ENCODE measurements at regions of chr17 and their contacts with region 1.

Region 1: GRCh38 chr17:44331249-44331760 is 6.7 kb upstream of the SLC25A39 start:
- DNase-seq: peak; percentile 87
- ATAC-seq: peak; percentile 22
- H3K4me3 ChIP-seq: no peak overlapping the region
- H3K4me3 Mint-ChIP-seq: no peak overlapping the region
- H3K27ac ChIP-seq: no peak overlapping the region
- H3K27ac Mint-ChIP-seq: peak overlapping the region; percentile 38
- H3K4me1 ChIP-seq: peaks cover 8 to 33% of the 10 kb centered on the region in 2 donors
- H3K4me1 Mint-ChIP-seq: peaks cover 30% of the 10 kb centered on the region
- H3K27me3 ChIP-seq: no peaks in the 10 kb centered on the region
- H3K27me3 Mint-ChIP-seq: no peaks in the 10 kb centered on the region
- CTCF ChIP-seq: peak; percentile 93

Region 2: DNA sequence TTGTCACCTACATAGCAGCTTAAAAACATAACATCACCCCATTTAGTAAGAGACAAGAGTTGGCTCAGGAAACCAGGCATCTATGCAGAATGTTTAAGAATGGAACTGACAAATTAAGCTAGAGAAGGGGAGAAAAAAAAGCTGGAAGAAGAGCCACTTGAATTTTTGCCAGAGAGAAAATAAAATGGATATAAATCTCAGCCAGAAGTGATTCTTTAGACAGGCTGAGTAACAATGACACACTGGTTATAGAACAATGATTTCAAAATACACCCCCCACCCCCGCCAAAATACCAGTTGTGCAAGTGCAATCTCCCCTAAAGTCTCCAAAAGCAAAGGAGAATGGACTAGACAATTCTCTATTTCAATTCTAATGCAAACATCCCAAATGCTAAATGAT is 287.2 kb before region 1 on chr17:
- CTCF ChIA-PET with region 1: no interaction called
- POLR2A ChIA-PET with region 1: no interaction called
- intact Hi-C with region 1: no loop called
- DNase-seq: no peak
- ATAC-seq: no peak
- H3K4me3 ChIP-seq: no peak overlapping the region
- H3K4me3 Mint-ChIP-seq: no peak overlapping the region
- H3K27ac ChIP-seq: no peak overlapping the region
- H3K27ac Mint-ChIP-seq: no peak overlapping the region
- H3K4me1 ChIP-seq: no peaks in the 10 kb centered on the region
- H3K4me1 Mint-ChIP-seq: peaks cover 9% of the 10 kb centered on the region
- H3K27me3 ChIP-seq: no peaks in the 10 kb centered on the region
- H3K27me3 Mint-ChIP-seq: no peaks in the 10 kb centered on the region
- CTCF ChIP-seq: no peak

Region 3: DNA sequence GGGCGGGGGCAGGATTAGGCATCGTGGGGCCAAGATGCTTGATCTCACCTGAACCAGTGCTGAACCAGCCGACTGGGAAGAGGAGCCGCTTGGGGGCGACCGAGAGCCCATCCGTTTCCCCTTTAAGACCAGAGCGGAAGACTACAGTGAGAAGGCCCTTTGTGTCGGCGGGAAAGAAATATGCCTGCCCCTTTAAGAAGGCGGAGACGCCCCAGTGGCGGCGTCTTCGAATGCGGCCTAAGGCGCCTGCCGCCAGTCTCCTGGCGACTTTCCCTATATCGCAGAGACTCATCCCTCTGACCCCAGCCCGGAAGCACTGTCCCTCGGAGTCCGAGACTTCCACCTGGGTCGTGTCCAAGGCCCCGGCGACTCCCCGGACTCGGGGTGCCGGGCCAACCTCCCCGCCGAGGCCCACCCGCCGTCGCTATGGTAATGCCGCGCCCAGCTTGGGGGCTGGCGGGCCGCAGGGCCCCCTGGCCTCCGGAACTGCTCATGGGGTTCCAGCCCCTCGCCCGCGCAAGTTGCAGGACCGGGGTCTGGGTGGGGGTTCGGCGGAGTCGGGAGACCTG is 189.5 kb before region 1 on chr17 and contains the start of gene HROB:
- CTCF ChIA-PET with region 1: interaction called, 3 read pairs
- POLR2A ChIA-PET with region 1: interaction called, 4 read pairs
- intact Hi-C with region 1: loop called (anchors 1 kb)
- DNase-seq: peak; percentile 97
- ATAC-seq: peak; percentile 99
- H3K4me3 ChIP-seq: peak within 1 kb of the TSS; percentile 41 to 85 (median 76)
- H3K4me3 Mint-ChIP-seq: peak within 1 kb of the TSS; percentile 87
- H3K27ac ChIP-seq: peak within 1 kb of the TSS; percentile 57 to 84
- H3K27ac Mint-ChIP-seq: peak within 1 kb of the TSS; percentile 61
- H3K4me1 ChIP-seq: peaks cover 9 to 11% of the 10 kb centered on the region in 2 donors
- H3K4me1 Mint-ChIP-seq: peaks cover 8% of the 10 kb centered on the region
- H3K27me3 ChIP-seq: peaks cover 0 to 20% (median 3%) of the 10 kb centered on the region in 4 experiments
- H3K27me3 Mint-ChIP-seq: peaks cover 14% of the 10 kb centered on the region
- CTCF ChIP-seq: peak; percentile 84
- total RNA-seq, gene HROB: 2.7 and 3.2 TPM in 2 replicates

Region 4: DNA sequence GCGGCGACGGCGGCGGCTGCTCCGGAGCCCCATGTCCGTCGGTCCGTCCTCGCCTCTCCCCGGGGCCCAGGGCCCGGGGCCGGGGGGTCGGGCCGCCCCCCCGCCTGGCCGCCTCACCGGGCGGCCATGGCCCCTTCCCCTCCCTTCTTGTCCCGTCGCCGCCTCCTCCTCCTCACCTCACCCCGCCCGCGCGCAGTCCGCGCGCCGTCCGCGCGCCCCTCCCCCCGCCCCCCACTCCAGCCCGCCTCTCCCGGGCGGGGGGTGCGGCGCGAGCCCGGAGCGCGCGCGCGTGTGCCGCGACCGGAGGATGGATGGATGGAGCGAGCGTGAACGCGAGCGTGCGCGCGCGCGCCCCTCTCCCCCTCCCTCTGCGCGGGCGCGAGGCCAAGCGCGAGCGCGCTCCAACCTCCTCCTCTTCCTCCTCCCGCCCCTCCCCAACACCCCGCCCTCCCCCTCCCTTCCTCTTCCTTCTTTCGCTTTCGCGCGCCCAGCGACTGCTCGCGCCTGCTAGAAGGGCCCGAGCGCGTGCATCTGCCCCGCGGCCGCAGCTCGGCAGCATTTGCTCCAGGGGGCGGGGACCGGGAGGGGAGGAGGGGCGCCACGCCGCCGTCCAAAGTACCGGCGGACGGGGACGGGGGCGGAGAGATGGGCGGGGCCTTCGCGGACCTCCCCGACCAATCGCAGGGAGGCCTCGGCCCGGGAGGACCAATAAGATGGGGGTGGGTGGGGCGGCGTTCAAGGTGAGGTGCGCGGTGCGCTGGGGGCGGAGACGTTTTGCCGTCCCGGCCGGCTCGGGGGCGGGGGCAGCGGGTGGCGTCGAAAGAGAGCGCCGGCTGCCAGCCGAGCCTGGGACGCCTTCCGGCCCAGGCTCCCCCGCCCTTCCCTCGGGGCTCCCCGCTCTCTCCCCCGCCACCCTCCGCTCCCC is 131.5 kb before region 1 on chr17 and contains the start of gene ATXN7L3:
- CTCF ChIA-PET with region 1: interaction called, 14 read pairs
- POLR2A ChIA-PET with region 1: interaction called, 6 read pairs
- intact Hi-C with region 1: no loop called
- DNase-seq: peak; percentile 100
- ATAC-seq: peak; percentile 81
- H3K4me3 ChIP-seq: peak within 1 kb of the TSS; percentile 66 to 83 (median 81)
- H3K4me3 Mint-ChIP-seq: peak within 1 kb of the TSS; percentile 88
- H3K27ac ChIP-seq: peak within 1 kb of the TSS; percentile 89 to 90
- H3K27ac Mint-ChIP-seq: peak within 1 kb of the TSS; percentile 95
- H3K4me1 ChIP-seq: peaks cover 30 to 43% of the 10 kb centered on the region in 2 donors
- H3K4me1 Mint-ChIP-seq: peaks cover 46% of the 10 kb centered on the region
- H3K27me3 ChIP-seq: no peaks in the 10 kb centered on the region
- H3K27me3 Mint-ChIP-seq: no peaks in the 10 kb centered on the region
- CTCF ChIP-seq: no peak
- total RNA-seq, gene ATXN7L3: 107 and 119 TPM in 2 replicates

Region 5: DNA sequence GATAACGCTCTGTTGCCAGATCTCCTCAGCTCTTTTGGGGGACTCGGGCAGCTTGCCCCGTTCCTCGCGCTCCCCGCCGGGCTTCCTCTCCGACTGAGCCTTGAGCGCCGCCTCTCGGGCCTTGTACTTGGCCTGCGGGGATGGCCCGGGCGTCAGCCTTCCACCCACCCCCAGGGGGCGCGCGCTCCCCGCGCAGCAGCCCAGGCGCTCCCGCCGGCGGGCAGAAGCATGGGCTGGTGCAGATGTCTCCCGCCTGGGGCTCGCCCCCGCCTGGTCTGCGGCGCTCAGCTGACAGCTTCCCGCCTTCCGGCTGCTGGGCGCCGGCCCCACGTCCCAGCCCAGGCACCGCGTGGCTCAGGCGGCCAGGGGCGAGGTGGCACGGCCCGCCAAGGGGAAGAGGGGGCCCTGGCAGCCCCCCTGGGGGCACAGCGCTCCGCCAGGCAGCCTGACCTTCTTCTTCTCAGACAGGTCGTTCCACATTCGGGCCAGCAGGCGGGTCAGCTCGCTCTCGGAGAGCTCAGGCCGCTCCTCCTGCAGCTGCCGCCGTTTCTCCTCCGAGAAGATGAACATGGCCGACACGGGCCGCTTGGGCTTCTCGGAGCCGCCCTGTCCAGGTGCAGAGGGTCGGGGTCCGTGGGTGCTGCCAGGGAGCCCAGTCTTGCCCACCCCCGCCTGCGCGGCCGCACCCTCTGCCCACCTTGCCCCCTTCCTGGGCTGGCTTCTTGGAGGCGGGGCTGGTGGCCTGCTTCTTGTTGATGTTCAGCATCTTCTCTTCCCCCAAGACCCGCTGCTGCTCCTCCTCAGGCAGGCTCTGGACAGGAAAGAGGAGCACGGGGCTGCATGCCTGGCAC is 120.7 kb before region 1 on chr17:
- CTCF ChIA-PET with region 1: interaction called, 44 read pairs
- POLR2A ChIA-PET with region 1: interaction called, 7 read pairs
- intact Hi-C with region 1: loop called (anchors 1 kb)
- DNase-seq: peak; percentile 93
- ATAC-seq: peak; percentile 98
- H3K4me3 ChIP-seq: no peak overlapping the region
- H3K4me3 Mint-ChIP-seq: peak overlapping the region; percentile 34
- H3K27ac ChIP-seq: peak overlapping the region; percentile 41 to 71
- H3K27ac Mint-ChIP-seq: peak overlapping the region; percentile 74
- H3K4me1 ChIP-seq: peaks cover 29 to 49% of the 10 kb centered on the region in 2 donors
- H3K4me1 Mint-ChIP-seq: peaks cover 46% of the 10 kb centered on the region
- H3K27me3 ChIP-seq: no peaks in the 10 kb centered on the region
- H3K27me3 Mint-ChIP-seq: no peaks in the 10 kb centered on the region
- CTCF ChIP-seq: peak; percentile 99

Region 6: GRCh38 chr17:44223541-44224071 is 107.7 kb before region 1 on chr17:
- CTCF ChIA-PET with region 1: interaction called, 13 read pairs
- POLR2A ChIA-PET with region 1: interaction called, 29 read pairs
- intact Hi-C with region 1: no loop called
- DNase-seq: no peak
- ATAC-seq: no peak
- H3K4me3 ChIP-seq: no peak overlapping the region
- H3K4me3 Mint-ChIP-seq: no peak overlapping the region
- H3K27ac ChIP-seq: no peak overlapping the region
- H3K27ac Mint-ChIP-seq: peak overlapping the region; percentile 41
- H3K4me1 ChIP-seq: peaks cover 6% of the 10 kb centered on the region in 2 donors
- H3K4me1 Mint-ChIP-seq: peaks cover 11% of the 10 kb centered on the region
- H3K27me3 ChIP-seq: no peaks in the 10 kb centered on the region
- H3K27me3 Mint-ChIP-seq: no peaks in the 10 kb centered on the region
- CTCF ChIP-seq: no peak

Region 7: DNA sequence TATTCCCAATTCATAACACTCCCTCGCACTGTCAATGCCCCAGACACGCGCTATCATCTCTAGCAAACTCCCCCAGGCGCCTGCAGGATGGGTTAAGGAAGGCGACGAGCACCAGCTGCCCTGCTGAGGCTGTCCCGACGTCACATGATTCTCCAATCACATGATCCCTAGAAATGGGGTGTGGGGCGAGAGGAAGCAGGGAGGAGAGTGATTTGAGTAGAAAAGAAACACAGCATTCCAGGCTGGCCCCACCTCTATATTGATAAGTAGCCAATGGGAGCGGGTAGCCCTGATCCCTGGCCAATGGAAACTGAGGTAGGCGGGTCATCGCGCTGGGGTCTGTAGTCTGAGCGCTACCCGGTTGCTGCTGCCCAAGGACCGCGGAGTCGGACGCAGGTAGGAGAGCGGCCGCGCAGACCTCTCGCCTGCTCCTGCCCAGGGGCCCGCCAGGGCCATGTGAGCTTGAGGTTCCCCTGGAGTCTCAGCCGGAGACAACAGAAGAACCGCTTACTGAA is 13.7 kb after region 1 on chr17 and contains the start of gene GRN:
- CTCF ChIA-PET with region 1: interaction called, 117 read pairs
- POLR2A ChIA-PET with region 1: interaction called, 10 read pairs
- intact Hi-C with region 1: loop called (anchors 1 kb)
- DNase-seq: peak; percentile 91
- ATAC-seq: peak; percentile 76
- H3K4me3 ChIP-seq: peak within 1 kb of the TSS; percentile 61 to 94 (median 91)
- H3K4me3 Mint-ChIP-seq: peak within 1 kb of the TSS; percentile 96
- H3K27ac ChIP-seq: peak within 1 kb of the TSS; percentile 85 to 89
- H3K27ac Mint-ChIP-seq: peak within 1 kb of the TSS; percentile 90
- H3K4me1 ChIP-seq: peaks cover 37 to 52% of the 10 kb centered on the region in 2 donors
- H3K4me1 Mint-ChIP-seq: peaks cover 45% of the 10 kb centered on the region
- H3K27me3 ChIP-seq: no peaks in the 10 kb centered on the region
- H3K27me3 Mint-ChIP-seq: no peaks in the 10 kb centered on the region
- CTCF ChIP-seq: no peak
- total RNA-seq, gene GRN: 185 and 187 TPM in 2 replicates

Region 8: GRCh38 chr17:44350733-44351226 is 19.5 kb after region 1 on chr17:
- CTCF ChIA-PET with region 1: interaction called, 117 read pairs
- POLR2A ChIA-PET with region 1: interaction called, 11 read pairs
- intact Hi-C with region 1: loop called (anchors 1 kb)
- DNase-seq: peak; percentile 83
- ATAC-seq: peak; percentile 41
- H3K4me3 ChIP-seq: no peak overlapping the region
- H3K4me3 Mint-ChIP-seq: peak overlapping the region; percentile 35
- H3K27ac ChIP-seq: no peak overlapping the region
- H3K27ac Mint-ChIP-seq: peak overlapping the region; percentile 58
- H3K4me1 ChIP-seq: peaks cover 40 to 46% of the 10 kb centered on the region in 2 donors
- H3K4me1 Mint-ChIP-seq: peaks cover 38% of the 10 kb centered on the region
- H3K27me3 ChIP-seq: no peaks in the 10 kb centered on the region
- H3K27me3 Mint-ChIP-seq: no peaks in the 10 kb centered on the region
- CTCF ChIP-seq: peak; percentile 85

Region 9: DNA sequence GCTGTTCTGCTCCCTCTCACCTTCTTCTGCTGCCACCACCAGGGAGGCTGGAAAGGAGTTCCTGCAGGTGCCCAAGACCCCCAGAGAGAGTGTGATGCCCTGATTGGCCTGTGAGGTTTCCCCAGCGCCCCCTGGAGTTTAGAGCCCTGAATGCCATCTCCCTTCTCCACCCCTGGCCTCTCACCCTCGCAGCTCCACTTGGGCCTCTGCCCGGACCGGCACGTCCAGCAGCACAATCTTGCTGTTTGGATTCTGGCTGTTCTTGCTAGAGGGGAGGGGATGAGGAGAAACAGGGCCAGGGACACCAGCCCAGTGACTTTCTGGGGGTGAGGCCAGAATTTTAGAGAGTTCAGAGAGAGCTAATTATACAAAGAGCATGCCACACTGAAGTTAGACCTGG is 44.8 kb after region 1 on chr17:
- CTCF ChIA-PET with region 1: no interaction called
- POLR2A ChIA-PET with region 1: no interaction called
- intact Hi-C with region 1: no loop called
- DNase-seq: no peak
- ATAC-seq: no peak
- H3K4me3 ChIP-seq: no peak overlapping the region
- H3K4me3 Mint-ChIP-seq: no peak overlapping the region
- H3K27ac ChIP-seq: no peak overlapping the region
- H3K27ac Mint-ChIP-seq: no peak overlapping the region
- H3K4me1 ChIP-seq: no peaks in the 10 kb centered on the region
- H3K4me1 Mint-ChIP-seq: peaks cover 3% of the 10 kb centered on the region
- H3K27me3 ChIP-seq: peaks cover 0 to 20% (median 0%) of the 10 kb centered on the region in 4 experiments
- H3K27me3 Mint-ChIP-seq: peaks cover 31% of the 10 kb centered on the region
- CTCF ChIP-seq: peak; percentile 34

Measured in B cell (primary cell).